Posterior cingulate gyrus (tissue), 11 donors: ENCODE measurements at regions of chr6 and their contacts with region 1.

Region 1: DNA sequence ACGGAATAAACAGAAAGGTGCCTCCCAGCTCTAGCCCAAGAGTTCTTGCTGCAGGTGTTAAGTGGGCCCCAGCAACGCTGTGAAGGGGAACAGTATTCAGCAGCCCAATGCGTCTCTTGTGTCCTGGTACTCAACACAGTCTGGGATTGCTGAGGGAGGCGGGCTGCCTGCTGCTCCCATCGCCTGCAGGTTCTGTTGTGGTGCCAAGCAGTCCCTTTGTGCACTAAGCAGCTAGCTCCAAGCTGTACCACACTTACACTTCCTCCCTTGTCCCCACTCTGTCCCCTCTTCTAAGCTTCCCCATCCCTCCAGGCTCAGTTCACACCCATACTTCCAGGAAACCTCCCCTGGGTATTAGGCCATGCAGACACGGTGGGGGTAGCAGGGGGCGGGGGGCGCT is 92.7 kb downstream of the AGPAT4 start:
- DNase-seq: peak in 3 of 10 donors; percentile 47 to 85 (median 76)

Region 2: GRCh38 chr6:161192636-161193411 is 11.7 kb after region 1 on chr6:
- intact Hi-C with region 1: loop called (anchors 2 kb)
- DNase-seq: no peak

Region 3: DNA sequence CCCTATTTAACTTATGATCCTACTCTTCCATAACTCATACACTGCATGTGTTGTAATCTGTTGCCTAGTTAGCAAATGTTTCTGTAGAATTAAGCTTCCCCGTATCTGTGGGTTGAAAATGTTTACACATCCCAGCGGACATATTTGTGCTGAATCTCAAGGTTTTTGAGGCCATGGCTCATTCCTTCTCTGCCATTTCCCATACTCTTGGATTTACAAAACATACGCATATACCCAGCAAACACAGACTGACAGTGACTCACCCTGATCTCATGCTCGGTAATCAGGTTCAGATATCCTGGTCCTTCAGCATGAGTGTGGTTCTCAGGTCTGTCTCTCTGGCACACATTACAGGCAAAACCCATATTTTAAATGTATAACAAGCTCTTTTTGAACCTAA is 34.1 kb after region 1 on chr6:
- intact Hi-C with region 1: no loop called
- DNase-seq: no peak

Region 4: DNA sequence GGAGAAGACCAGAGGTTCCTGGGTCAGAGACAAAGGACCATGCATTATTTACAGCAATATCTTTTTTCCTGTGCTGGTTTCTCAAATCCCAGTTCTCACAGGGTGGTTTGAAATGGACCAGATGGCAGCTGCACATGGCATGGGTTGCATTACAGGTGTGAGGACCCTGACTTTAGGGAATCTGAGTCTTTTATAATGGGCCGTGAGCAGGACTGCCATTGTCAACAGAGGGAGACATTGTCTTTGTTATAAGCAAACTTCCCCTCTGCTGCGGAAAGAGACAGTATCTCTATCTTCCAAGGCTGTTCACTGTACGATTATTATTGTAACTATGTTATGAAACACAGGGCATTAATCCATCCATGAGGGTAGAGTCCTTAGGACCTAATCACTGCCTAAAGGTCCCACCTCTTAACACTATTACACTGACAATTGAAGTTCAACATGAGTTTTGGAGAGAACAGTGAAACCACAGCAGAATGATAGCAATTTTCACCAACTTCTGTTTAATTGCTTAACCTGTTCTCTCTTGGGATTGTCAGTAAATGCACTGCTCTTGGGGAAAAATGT is 248.9 kb after region 1 on chr6:
- intact Hi-C with region 1: no loop called
- DNase-seq: no peak